ENCODE measurements at regions of chr4 and their contacts with region 1.

Region 1: DNA sequence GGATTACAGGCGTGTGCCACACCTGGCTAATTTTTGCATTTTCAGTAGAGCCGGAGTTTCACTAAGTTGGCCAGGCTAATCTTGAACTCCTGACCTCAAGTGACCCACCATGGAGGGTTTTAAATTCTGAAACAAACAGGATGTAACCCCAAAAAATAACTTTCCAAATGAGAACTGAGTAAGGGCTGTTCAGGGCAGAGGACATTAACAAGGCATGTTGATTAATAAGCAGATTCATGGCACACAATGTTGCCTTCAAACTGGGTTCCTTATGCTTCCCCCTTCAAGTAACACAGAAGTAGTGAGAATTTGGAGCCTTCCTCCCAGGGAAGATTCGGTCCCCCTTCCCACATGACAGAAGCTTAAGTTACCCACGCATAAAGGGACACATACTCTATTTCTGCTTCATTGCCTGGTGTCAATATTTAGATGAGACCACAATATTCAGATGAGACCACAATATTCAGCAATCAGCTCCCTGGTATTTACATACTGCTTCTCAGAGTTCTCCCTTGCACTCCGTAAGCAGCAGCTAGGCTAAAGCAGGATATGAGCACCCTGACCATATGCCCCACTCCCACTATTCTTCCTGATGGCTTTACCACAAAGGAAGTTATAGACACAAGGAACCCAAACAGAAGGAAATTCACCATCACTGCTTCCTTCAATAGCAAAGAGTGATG is 21.4 kb downstream of the GRSF1 start:
- DNase-seq: no peak
- ATAC-seq: no peak
- H3K4me3 ChIP-seq: no peak overlapping the region
- H3K27ac ChIP-seq: no peak overlapping the region
- H3K4me1 ChIP-seq: no peaks in the 10 kb centered on the region
- H3K27me3 ChIP-seq: no peaks in the 10 kb centered on the region
- CTCF ChIP-seq: no peak

Region 2: DNA sequence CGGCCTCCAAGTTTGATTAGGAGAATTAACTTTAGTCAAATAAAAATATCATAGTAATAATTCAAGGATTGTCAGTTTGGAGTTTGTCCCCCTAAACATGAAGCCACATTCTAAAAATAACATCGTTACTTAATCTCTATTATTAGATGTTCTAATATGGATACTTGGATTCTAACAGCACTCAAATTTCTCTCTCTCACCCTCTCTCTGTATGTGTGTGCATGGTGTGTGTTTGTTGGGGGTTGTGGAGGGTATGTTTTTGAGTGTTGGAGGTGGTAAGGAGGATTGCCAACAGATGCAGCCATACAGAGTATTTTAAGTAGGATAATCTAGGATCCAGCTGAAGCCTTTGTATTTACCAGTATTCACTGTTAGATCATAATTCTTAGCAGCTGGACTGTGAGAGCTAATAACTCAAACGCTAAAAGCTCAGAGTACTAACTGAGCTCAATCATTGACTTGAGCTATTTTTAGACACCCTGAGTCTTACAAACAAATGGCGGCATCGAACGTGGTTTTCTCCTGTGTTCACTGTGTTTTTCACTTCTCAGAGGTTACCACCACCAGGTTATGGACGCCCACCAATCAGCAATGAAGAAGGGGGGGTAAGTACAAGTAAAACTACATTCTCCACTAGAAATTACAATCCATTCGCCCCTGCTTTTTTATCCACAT is 180.9 kb before region 1 on chr4:
- CTCF ChIA-PET with region 1: interaction called, 11 read pairs
- POLR2A ChIA-PET with region 1: no interaction called
- in situ Hi-C with region 1: no loop called
- intact Hi-C with region 1: no loop called
- DNase-seq: no peak
- ATAC-seq: no peak
- H3K4me3 ChIP-seq: no peak overlapping the region
- H3K27ac ChIP-seq: no peak overlapping the region
- H3K4me1 ChIP-seq: no peaks in the 10 kb centered on the region
- H3K27me3 ChIP-seq: no peaks in the 10 kb centered on the region
- CTCF ChIP-seq: no peak

Region 3: GRCh38 chr4:70651864-70652506 is 166.3 kb before region 1 on chr4:
- CTCF ChIA-PET with region 1: no interaction called
- POLR2A ChIA-PET with region 1: interaction called, 13 read pairs
- in situ Hi-C with region 1: no loop called
- intact Hi-C with region 1: loop called (anchors 10 kb)
- DNase-seq: peak; percentile 30
- ATAC-seq: peak; percentile 76
- H3K4me3 ChIP-seq: peak overlapping the region in 1 of 2 experiments; percentile 17; a peak in 1 of 4 replicates
- H3K27ac ChIP-seq: no peak overlapping the region
- H3K4me1 ChIP-seq: no peaks in the 10 kb centered on the region
- H3K27me3 ChIP-seq: no peaks in the 10 kb centered on the region
- CTCF ChIP-seq: peak; percentile 64

Region 4: GRCh38 chr4:70868778-70869177 is 50.5 kb after region 1 on chr4:
- CTCF ChIA-PET with region 1: no interaction called
- POLR2A ChIA-PET with region 1: no interaction called
- in situ Hi-C with region 1: no loop called
- intact Hi-C with region 1: no loop called
- DNase-seq: no peak
- ATAC-seq: no peak
- H3K4me3 ChIP-seq: no peak overlapping the region
- H3K27ac ChIP-seq: no peak overlapping the region
- H3K4me1 ChIP-seq: no peaks in the 10 kb centered on the region
- H3K27me3 ChIP-seq: no peaks in the 10 kb centered on the region
- CTCF ChIP-seq: no peak